Natural killer cell (primary cell): ENCODE measurements at regions of chr19 and their contacts with region 1.

Region 1: DNA sequence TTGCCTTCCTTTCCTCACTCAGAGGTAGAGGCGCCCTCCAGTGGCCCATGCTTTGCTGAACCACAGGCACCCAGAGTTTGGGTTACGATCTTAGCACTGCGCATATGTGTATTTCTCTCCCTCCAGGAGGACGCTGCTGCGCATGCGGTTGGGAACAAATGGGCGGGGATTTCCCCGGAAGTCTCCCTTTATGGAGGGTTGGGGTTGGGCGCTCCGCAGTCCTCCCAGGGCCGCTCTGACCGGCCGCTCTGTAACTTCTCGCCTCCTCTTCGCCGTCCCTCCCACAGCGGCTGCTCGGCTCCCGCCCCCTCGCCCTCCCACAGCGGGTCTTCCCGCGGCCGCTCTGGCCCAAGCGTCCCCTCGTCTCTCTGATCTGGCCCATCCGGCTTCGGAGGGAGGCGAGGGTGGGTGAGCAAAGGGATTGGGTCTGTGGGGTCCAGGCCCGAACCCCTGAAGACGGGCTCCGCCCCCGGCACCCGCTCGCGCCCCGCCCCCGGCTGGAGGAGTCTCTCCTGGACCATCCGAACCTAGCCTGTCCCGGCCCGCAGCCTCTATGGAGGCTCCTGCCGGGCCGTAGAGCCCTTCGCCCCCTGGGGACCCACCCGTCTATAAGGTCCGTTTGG is at the start of gene MEGF8:
- DNase-seq: peak; percentile 96 to 99
- ATAC-seq: peak; percentile 88 to 97 (median 91)
- H3K4me3 ChIP-seq: peak within 1 kb of the TSS; percentile 83
- H3K4me3 Mint-ChIP-seq: peak within 1 kb of the TSS; percentile 95
- H3K27ac ChIP-seq: peak within 1 kb of the TSS; percentile 62
- H3K27ac Mint-ChIP-seq: peak within 1 kb of the TSS; percentile 65 to 79
- H3K4me1 ChIP-seq: peaks cover 20% of the 10 kb centered on the region
- H3K4me1 Mint-ChIP-seq: peaks cover 17 to 29% of the 10 kb centered on the region in 2 donors
- H3K27me3 ChIP-seq: peaks cover 8% of the 10 kb centered on the region
- H3K27me3 Mint-ChIP-seq: peaks cover 15 to 19% of the 10 kb centered on the region in 2 donors
- CTCF ChIP-seq: peak; percentile 82
- total RNA-seq, gene MEGF8: 8.1 to 11.3 (median 10.5) TPM

Region 2: GRCh38 chr19:42075616-42076379 is 249.6 kb before region 1 on chr19 and contains the start of gene ZNF574:
- intact Hi-C with region 1: loop called (anchors 1 kb)
- DNase-seq: peak; percentile 94 to 99
- ATAC-seq: peak; percentile 92 to 99 (median 93)
- H3K4me3 ChIP-seq: peak within 1 kb of the TSS; percentile 63
- H3K4me3 Mint-ChIP-seq: peak within 1 kb of the TSS; percentile 98
- H3K27ac ChIP-seq: peak within 1 kb of the TSS; percentile 95
- H3K27ac Mint-ChIP-seq: peak within 1 kb of the TSS; percentile 100
- H3K4me1 ChIP-seq: peaks cover 17% of the 10 kb centered on the region
- H3K4me1 Mint-ChIP-seq: peaks cover 35 to 39% of the 10 kb centered on the region in 2 donors
- H3K27me3 ChIP-seq: no peaks in the 10 kb centered on the region
- H3K27me3 Mint-ChIP-seq: peaks cover 0 to 6% of the 10 kb centered on the region in 2 donors
- CTCF ChIP-seq: no peak
- total RNA-seq, gene ZNF574: 21.6 to 23.7 (median 23.1) TPM

Region 3: GRCh38 chr19:42132851-42133528 is 192.4 kb before region 1 on chr19:
- intact Hi-C with region 1: loop called (anchors 1 kb)
- DNase-seq: peak; percentile 83 to 92
- ATAC-seq: peak; percentile 74 to 86 (median 77)
- H3K4me3 ChIP-seq: peak overlapping the region; percentile 73
- H3K4me3 Mint-ChIP-seq: peak overlapping the region; percentile 80
- H3K27ac ChIP-seq: peak overlapping the region; percentile 49
- H3K27ac Mint-ChIP-seq: peak overlapping the region; percentile 58 to 86
- H3K4me1 ChIP-seq: peaks cover 73% of the 10 kb centered on the region
- H3K4me1 Mint-ChIP-seq: peaks cover 36 to 73% of the 10 kb centered on the region in 2 donors
- H3K27me3 ChIP-seq: no peaks in the 10 kb centered on the region
- H3K27me3 Mint-ChIP-seq: no peaks in the 10 kb centered on the region
- CTCF ChIP-seq: peak; percentile 100

Region 4: DNA sequence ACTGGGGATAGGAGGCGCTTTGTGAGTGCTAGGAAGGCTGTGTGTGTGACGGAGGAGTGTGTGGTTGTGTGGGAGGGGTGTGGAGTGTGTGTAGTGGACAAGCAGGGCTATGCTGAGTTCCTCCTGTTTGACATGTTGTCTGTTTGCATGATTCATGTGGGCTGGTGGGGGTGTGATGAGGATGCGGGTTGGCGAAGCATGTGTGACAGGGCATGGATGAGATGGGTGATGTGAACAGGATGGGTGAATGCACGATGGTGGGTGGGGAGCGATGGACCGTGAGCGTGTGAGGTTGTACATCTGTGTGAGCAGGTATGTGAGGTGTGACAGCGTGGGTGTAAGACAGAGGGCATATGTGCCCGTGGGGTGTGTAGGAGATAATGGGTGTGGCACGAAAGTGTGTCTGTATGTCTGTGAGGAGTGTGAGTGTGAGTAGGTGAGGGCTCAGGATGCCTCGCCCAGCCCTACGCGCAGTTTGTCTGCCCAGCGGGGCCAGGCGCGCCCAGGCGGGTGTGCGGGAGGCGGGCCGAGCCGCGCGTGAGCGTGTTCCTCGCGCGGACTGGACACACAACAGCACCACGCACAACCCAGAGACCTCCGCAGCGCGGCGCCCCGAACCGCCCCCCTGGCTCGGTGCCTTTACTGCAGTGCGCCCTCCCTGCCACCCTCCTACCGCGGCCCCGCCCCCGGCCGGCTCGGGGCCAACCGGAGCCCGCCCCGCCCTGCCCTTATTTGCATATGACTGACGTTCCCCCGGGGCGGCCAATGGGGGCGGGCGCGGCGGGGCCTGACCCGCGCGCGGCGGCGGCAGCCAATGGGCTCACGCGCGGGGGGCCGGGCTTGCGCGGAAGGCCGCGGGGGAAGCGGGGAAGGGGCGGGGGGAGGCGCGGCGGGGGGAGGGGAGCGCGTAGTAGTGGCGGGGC is 42.0 kb before region 1 on chr19:
- intact Hi-C with region 1: loop called (anchors 1 kb)
- DNase-seq: peak; percentile 91 to 97
- ATAC-seq: peak; percentile 63 to 86 (median 72)
- H3K4me3 ChIP-seq: peak overlapping the region; percentile 52
- H3K4me3 Mint-ChIP-seq: no peak overlapping the region
- H3K27ac ChIP-seq: peak overlapping the region; percentile 99
- H3K27ac Mint-ChIP-seq: no peak overlapping the region
- H3K4me1 ChIP-seq: peaks cover 67% of the 10 kb centered on the region
- H3K4me1 Mint-ChIP-seq: peaks cover 28 to 35% of the 10 kb centered on the region in 2 donors
- H3K27me3 ChIP-seq: no peaks in the 10 kb centered on the region
- H3K27me3 Mint-ChIP-seq: no peaks in the 10 kb centered on the region
- CTCF ChIP-seq: no peak

Region 5: DNA sequence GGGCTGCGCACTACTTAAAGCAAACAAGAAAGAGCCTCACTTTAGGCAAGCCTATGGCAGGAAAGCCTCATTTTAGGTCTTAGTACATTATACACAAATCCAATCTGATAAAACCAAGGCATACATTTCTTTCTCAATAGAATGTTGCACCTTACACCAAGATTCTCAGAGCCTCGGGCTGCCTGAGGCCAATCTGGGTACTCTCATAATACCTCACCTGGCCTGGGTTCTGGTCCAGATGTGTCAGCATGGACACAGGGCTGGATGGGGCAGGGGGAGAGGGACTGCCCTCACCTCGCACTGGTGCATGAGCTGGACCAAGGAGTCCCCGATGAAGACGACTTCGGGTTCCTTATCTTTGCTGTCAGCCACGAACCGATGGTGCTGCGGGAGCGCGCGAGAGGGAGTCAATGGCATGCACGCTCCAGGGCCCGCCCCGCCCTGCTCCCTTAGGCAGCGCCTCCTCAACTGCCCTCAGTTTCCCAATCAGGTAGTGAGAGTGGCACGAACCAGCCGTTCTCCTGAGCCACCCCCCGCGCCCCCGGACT is 23.7 kb before region 1 on chr19 and contains the start of gene PRR19:
- intact Hi-C with region 1: loop called (anchors 2 kb)
- DNase-seq: peak in 1 of 2 donors; percentile 49
- ATAC-seq: peak in 1 of 3 donors; percentile 5
- H3K4me3 ChIP-seq: peak within 1 kb of the TSS; percentile 64
- H3K4me3 Mint-ChIP-seq: peak within 1 kb of the TSS; percentile 79
- H3K27ac ChIP-seq: peak within 1 kb of the TSS; percentile 22
- H3K27ac Mint-ChIP-seq: peak within 1 kb of the TSS in 1 of 2 donors; percentile 74
- H3K4me1 ChIP-seq: peaks cover 17% of the 10 kb centered on the region
- H3K4me1 Mint-ChIP-seq: peaks cover 12 to 20% of the 10 kb centered on the region in 2 donors
- H3K27me3 ChIP-seq: no peaks in the 10 kb centered on the region
- H3K27me3 Mint-ChIP-seq: peaks cover 0 to 3% of the 10 kb centered on the region in 2 donors
- CTCF ChIP-seq: no peak
- total RNA-seq, gene PRR19: not detected

Region 6: GRCh38 chr19:42396381-42397262 is 71.2 kb after region 1 on chr19:
- intact Hi-C with region 1: loop called (anchors 2 kb)
- DNase-seq: peak; percentile 93 to 97
- ATAC-seq: peak; percentile 94 to 97 (median 94)
- H3K4me3 ChIP-seq: peak overlapping the region; percentile 87
- H3K4me3 Mint-ChIP-seq: peak overlapping the region; percentile 85
- H3K27ac ChIP-seq: peak overlapping the region; percentile 72
- H3K27ac Mint-ChIP-seq: peak overlapping the region; percentile 94 to 98
- H3K4me1 ChIP-seq: peaks cover 27% of the 10 kb centered on the region
- H3K4me1 Mint-ChIP-seq: peaks cover 23 to 46% of the 10 kb centered on the region in 2 donors
- H3K27me3 ChIP-seq: no peaks in the 10 kb centered on the region
- H3K27me3 Mint-ChIP-seq: peaks cover 4 to 7% of the 10 kb centered on the region in 2 donors
- CTCF ChIP-seq: no peak